ENCODE measurements at regions of chr3 and their contacts with region 1.

Region 1: GRCh38 chr3:173553635-173554280 is 156.2 kb downstream of the NLGN1 start:
- DNase-seq: no peak
- ATAC-seq: peak; percentile 60

Region 2: GRCh38 chr3:172808969-172809546 is 744.7 kb before region 1 on chr3:
- intact Hi-C with region 1: loop called (anchors 5 kb)
- DNase-seq: no peak
- ATAC-seq: peak; percentile 56

Region 3: GRCh38 chr3:173411375-173411973 is 142.3 kb before region 1 on chr3:
- intact Hi-C with region 1: loop called (anchors 10 kb)
- DNase-seq: no peak
- ATAC-seq: peak; percentile 90

Region 4: GRCh38 chr3:174062923-174063322 is 509.2 kb after region 1 on chr3:
- intact Hi-C with region 1: no loop called
- DNase-seq: no peak
- ATAC-seq: no peak

Measured in Right ventricle myocardium superior (tissue), 1 donor.